ENCODE measurements at regions of chr5 and their contacts with region 1.

Region 1: GRCh38 chr5:174045470-174046025 is at the start of gene NSG2:
- DNase-seq: peak; percentile 66
- CTCF ChIP-seq: peak; percentile 61

Region 2: GRCh38 chr5:174056064-174056847 is 10.7 kb after region 1 on chr5:
- CTCF ChIA-PET with region 1: interaction called, 22 read pairs
- POLR2A ChIA-PET with region 1: no interaction called
- DNase-seq: no peak
- CTCF ChIP-seq: no peak

Region 3: GRCh38 chr5:174317259-174317894 is 271.8 kb after region 1 on chr5:
- CTCF ChIA-PET with region 1: interaction called, 80 read pairs
- POLR2A ChIA-PET with region 1: no interaction called
- DNase-seq: peak; percentile 42
- CTCF ChIP-seq: peak; percentile 67

Region 4: DNA sequence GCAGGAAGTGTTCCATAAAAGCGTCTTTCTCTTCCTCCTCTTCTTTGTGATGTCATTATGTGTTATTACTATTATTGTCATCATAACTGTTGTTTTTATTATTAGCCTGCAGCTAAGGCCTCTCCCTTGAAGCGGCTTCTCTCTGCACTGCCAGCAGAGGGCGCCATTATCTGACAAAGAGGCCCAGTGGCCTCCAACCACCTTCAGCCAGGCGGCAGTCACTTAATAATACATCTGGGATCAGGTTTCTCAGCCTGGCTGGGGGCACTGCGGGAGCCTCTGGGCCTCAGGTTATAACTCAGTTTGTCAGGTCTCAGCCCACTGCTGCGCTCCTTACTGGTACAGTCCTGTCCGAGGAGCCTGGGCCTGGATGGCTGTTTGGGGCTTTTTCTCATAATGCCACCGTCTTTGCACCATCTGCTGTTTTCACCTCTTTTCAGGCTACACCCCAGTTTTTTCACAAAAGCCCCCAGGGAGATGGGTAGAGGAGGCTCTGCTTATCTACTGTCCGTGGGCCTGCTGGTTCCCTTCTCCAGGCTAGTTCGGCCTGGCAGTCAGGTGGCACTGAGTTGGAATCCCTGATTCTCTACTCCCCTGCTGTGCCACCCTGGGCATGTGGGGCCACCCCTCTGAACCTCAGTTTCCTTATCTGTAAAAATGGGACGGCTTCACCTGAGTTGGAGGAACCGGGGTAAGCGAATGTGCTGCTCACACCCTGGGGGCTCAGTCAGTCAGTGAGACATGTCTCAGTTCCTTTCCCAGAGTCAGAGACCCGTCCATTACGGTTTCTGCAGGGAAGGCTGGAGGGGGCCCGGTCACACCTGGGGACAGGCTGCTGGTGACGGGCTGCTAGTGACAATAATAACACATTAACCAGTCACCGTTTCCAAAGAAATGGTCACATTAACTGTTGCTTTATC is 282.0 kb after region 1 on chr5:
- CTCF ChIA-PET with region 1: interaction called, 13 read pairs
- POLR2A ChIA-PET with region 1: no interaction called
- DNase-seq: peak; percentile 77
- CTCF ChIP-seq: peak; percentile 73

Measured in GM10248 (cell line).